H1 (cell line): ENCODE measurements at regions of chr3 and their contacts with region 1.

Region 1: GRCh38 chr3:186079925-186080324 is 29.0 kb downstream of the ETV5 start:
- DNase-seq: no peak
- H3K4me3 ChIP-seq: peak overlapping the region in 1 of 4 experiments; percentile 23; a peak in 1 of 8 replicates
- H3K27ac ChIP-seq: no peak overlapping the region
- H3K4me1 ChIP-seq: peaks cover 4 to 16% (median 16%) of the 10 kb centered on the region in 4 experiments; a peak in 6 of 7 replicates
- H3K27me3 ChIP-seq: no peaks in the 10 kb centered on the region
- CTCF ChIP-seq: no peak
- EP300 ChIP-seq: no peak
- POLR2A ChIP-seq: no peak
- RAD21 ChIP-seq: no peak

Region 2: DNA sequence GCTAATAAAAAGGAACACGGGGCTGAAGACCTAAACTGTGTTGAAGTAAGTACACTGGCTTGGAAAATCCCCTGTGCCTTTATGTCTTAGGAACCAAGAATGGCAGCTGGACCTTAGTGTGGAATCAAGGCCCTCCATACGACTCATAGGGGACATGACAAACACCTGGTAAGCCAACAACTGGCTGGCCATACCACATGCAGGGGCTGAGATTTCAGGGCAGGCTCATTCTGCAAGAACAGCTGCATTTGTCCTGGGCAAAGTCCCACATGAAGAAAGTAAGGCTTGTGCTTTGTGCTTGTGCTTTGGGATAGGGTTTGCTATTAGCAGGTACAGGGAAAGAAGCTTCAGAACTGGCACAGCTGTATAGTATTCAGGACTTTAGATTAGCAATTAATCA is 11.0 kb after region 1 on chr3:
- CTCF ChIA-PET with region 1: interaction called, 4 read pairs
- POLR2A ChIA-PET with region 1: interaction called, 15 read pairs
- DNase-seq: no peak
- H3K4me3 ChIP-seq: no peak overlapping the region
- H3K27ac ChIP-seq: no peak overlapping the region
- H3K4me1 ChIP-seq: peaks cover 0 to 9% (median 3%) of the 10 kb centered on the region in 4 experiments; a peak in 4 of 7 replicates
- H3K27me3 ChIP-seq: no peaks in the 10 kb centered on the region
- CTCF ChIP-seq: no peak
- EP300 ChIP-seq: no peak
- POLR2A ChIP-seq: no peak
- RAD21 ChIP-seq: no peak

Region 3: DNA sequence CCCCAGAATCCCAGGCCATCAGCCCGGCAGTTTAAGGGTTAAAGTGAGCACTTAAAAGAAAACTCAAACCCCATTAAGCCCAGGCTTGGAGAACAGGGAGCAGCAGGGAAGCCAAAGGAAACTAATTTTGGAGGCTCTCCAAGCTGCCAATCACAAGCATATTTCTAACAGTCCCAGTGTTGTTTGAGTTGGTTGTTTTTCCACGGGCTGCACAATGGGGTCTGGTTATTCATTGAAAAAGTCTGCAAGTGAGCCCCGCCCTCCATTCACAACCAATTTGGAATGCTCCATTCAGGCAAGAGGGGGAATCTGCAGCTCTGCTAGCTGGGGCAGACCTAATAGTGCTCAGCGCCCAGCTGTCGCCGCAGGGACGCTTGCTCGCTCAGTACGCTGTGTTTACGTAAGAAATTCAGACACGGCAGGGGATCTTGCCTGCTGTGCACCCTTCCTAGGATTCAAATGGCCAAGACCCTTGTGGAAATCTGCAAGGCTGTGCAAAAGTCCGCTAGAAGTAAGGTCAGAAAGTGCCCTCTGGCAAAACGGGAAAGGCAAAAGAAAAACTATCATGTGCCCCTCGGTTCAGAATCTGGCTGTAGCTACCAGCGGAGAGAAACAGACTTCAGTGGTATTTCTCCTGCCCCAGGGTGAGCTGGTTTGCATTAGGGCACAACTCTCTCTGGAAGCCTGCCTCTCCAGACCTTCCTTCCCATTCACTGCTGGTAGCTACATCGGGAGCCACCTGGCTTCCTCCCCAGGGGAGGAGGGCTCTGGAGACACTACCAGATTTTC is 17.9 kb after region 1 on chr3:
- CTCF ChIA-PET with region 1: interaction called, 19 read pairs
- POLR2A ChIA-PET with region 1: interaction called, 11 read pairs
- DNase-seq: peak in 1 of 2 experiments; percentile 84
- H3K4me3 ChIP-seq: peak overlapping the region; percentile 44 to 57 (median 47); a peak in 7 of 8 replicates
- H3K27ac ChIP-seq: no peak overlapping the region
- H3K4me1 ChIP-seq: peaks cover 5 to 26% (median 22%) of the 10 kb centered on the region in 4 experiments
- H3K27me3 ChIP-seq: peaks cover 0 to 15% (median 9%) of the 10 kb centered on the region in 4 experiments; a peak in 5 of 7 replicates
- CTCF ChIP-seq: no peak
- EP300 ChIP-seq: peak in 1 of 2 experiments; percentile 93; a peak in 2 of 3 replicates
- POLR2A ChIP-seq: peak; percentile 17 to 31; a peak in 2 of 3 replicates
- RAD21 ChIP-seq: 0 out of 4 replicates have a peak, but pooled peaks of 1 of the 2 experiments have one; percentile 1